Panc1 (cell line): ENCODE measurements at regions of chrX and their contacts with region 1.

Region 1: GRCh38 chrX:115912372-115912897 is 258.1 kb upstream of the AGTR2 start:
- DNase-seq: no peak
- ATAC-seq: no peak
- H3K4me3 ChIP-seq: no peak overlapping the region
- H3K27ac ChIP-seq: no peak overlapping the region
- H3K4me1 ChIP-seq: no peaks in the 10 kb centered on the region
- H3K27me3 ChIP-seq: no peaks in the 10 kb centered on the region
- CTCF ChIP-seq: no peak

Region 2: DNA sequence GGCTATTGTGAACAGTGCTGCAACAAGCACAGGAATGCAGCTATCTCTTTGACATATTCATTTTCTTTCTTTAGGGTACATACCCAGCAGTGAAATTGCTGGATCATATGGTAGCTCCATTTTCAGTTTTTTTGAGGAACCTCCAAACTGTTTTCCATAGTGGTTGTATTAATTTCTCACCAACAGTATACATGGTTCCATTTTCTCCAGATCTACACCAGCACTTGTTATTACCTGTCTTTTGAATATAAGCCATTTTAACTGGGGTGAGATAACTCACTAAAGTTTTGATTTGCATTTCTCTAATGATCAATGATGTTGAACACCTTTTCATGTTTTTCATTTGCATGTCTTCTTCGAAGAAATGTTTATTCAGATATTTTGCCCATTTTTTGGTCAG is 17.0 kb after region 1 on chrX:
- CTCF ChIA-PET with region 1: no interaction called
- POLR2A ChIA-PET with region 1: no interaction called
- in situ Hi-C with region 1: no loop called
- intact Hi-C with region 1: no loop called
- DNase-seq: no peak
- ATAC-seq: no peak
- H3K4me3 ChIP-seq: no peak overlapping the region
- H3K27ac ChIP-seq: no peak overlapping the region
- H3K4me1 ChIP-seq: no peaks in the 10 kb centered on the region
- H3K27me3 ChIP-seq: no peaks in the 10 kb centered on the region
- CTCF ChIP-seq: no peak

Region 3: GRCh38 chrX:115957862-115958483 is 45.5 kb after region 1 on chrX:
- CTCF ChIA-PET with region 1: no interaction called
- POLR2A ChIA-PET with region 1: interaction called, 12 read pairs
- in situ Hi-C with region 1: no loop called
- intact Hi-C with region 1: no loop called
- DNase-seq: no peak
- ATAC-seq: no peak
- H3K4me3 ChIP-seq: no peak overlapping the region
- H3K27ac ChIP-seq: no peak overlapping the region
- H3K4me1 ChIP-seq: no peaks in the 10 kb centered on the region
- H3K27me3 ChIP-seq: no peaks in the 10 kb centered on the region
- CTCF ChIP-seq: no peak

Region 4: DNA sequence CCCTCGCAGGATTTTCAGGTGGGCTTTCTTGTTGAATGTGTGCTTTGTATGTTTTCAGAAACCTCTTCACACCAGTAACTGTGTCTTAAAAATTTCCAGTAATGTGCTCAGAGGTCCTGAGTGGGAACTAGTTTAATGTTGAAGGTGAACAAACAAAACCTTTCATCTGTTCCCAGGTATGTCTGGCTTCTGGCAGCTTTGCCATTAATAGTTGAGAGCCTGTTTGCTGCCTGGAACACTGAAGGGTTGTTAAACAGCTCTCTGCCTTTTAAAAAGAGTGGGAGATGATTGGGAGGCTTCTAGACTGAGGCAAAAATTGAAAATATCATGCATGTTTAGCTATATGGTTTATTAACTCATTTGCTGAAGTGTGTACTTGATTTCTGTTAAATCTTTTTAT is 96.9 kb after region 1 on chrX:
- CTCF ChIA-PET with region 1: no interaction called
- POLR2A ChIA-PET with region 1: no interaction called
- in situ Hi-C with region 1: no loop called
- intact Hi-C with region 1: no loop called
- DNase-seq: no peak
- ATAC-seq: no peak
- H3K4me3 ChIP-seq: no peak overlapping the region
- H3K27ac ChIP-seq: no peak overlapping the region
- H3K4me1 ChIP-seq: no peaks in the 10 kb centered on the region
- H3K27me3 ChIP-seq: peaks cover 5% of the 10 kb centered on the region; the same call in 1 of the 2 replicates
- CTCF ChIP-seq: no peak